Esophagus muscularis mucosa (tissue), 4 donors: ENCODE measurements at regions of chr5 and their contacts with region 1.

Region 1: DNA sequence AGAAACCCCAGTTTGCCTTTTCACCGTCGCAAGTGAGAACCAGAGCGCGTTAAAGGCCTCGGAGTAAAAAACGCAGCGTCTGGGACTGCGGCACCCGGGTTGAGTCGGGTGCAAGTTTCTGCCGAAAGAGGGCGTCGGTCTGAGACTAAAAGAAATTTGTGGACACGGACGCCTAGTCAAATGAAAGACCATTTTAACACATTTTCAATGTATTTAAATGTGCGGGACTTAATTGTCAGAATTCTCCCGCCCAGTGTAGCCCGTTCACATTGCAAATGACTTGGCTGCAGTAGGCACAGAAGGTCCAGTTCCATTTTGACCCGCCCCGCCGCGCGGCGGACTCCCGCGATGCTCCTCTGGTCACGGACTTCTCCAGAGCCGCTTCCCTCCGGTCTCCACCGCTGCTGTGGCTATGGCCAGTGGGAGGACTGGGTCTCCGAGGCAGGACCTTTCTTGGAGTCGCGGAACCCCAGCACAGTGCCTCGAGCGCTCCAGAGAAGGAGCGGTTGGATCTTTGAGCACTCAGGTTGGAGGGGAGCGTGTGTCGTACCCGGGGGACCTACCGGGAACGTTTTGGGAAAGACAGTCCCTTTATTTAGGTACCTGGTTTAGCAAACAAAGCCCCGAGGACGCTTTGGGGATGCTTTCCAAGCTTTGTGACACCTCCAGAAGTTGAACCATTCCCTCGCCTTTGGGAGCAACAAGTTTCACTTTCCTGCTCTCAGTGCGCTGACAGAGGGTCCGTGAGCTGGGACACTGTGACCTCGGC is 1.2 kb upstream of the NPR3 start:
- DNase-seq: no peak
- H3K4me3 ChIP-seq: peak overlapping the region; percentile 63 to 75 (median 64)
- H3K27ac ChIP-seq: peak overlapping the region in 3 of 4 donors; percentile 5 to 58 (median 10)
- H3K4me1 ChIP-seq: peaks cover 28 to 53% (median 42%) of the 10 kb centered on the region in 4 donors
- H3K27me3 ChIP-seq: peaks cover 3 to 47% (median 20%) of the 10 kb centered on the region in 4 donors
- CTCF ChIP-seq: peak; percentile 54 to 74 (median 66)
- EP300 ChIP-seq: no peak
- POLR2A ChIP-seq: no peak

Region 2: DNA sequence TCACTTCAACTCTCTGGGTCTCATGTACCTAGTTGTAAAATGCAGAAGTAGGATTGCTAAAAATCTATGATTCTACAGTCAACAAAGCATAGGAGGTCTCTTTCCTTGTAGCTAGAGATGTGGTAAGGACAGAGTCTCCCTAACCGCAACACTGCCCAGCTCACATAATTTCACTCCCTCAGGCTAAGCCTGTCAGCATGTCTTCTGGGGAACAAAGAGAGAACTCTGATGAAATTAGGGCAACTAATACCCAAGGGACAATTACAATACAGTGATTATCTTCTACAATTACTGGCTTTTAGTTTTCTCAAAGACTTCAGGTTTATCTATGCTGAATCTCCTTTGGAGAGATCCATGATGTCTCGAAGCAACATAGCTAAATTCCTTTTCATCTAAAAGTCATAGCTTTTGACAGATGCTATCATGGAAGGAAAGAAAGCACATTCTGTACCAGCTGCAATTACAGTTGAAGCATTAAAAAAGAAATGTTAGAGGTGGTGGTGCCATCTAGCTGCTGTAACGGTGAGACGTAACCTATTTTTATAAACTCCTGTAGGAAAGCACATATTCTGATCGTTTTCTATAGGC is 589.8 kb after region 1 on chr5:
- intact Hi-C with region 1: loop called (anchors 10 kb)
- DNase-seq: no peak
- H3K4me3 ChIP-seq: no peak overlapping the region
- H3K27ac ChIP-seq: peak overlapping the region in 2 of 4 donors; percentile 2 to 8
- H3K4me1 ChIP-seq: peaks cover 0 to 14% (median 13%) of the 10 kb centered on the region in 4 donors
- H3K27me3 ChIP-seq: no peaks in the 10 kb centered on the region
- CTCF ChIP-seq: peak; percentile 41 to 53 (median 52)
- EP300 ChIP-seq: no peak
- POLR2A ChIP-seq: no peak

Region 3: GRCh38 chr5:33423018-33423630 is 713.2 kb after region 1 on chr5:
- intact Hi-C with region 1: loop called (anchors 5 kb)
- DNase-seq: no peak
- H3K4me3 ChIP-seq: no peak overlapping the region
- H3K27ac ChIP-seq: no peak overlapping the region
- H3K4me1 ChIP-seq: no peaks in the 10 kb centered on the region
- H3K27me3 ChIP-seq: peaks cover 0 to under 1% (median 0%) of the 10 kb centered on the region in 4 donors
- CTCF ChIP-seq: peak; percentile 37 to 40 (median 38)
- EP300 ChIP-seq: no peak
- POLR2A ChIP-seq: no peak